Aorta (tissue), 5 donors: ENCODE measurements at regions of chr9 and their contacts with region 1.

Region 1: GRCh38 chr9:117644133-117644931 is 59.9 kb upstream of the TLR4 start:
- DNase-seq: peak; percentile 75 to 91
- ATAC-seq: peak; percentile 91
- H3K4me3 ChIP-seq: peak overlapping the region; percentile 26 to 37
- H3K27ac ChIP-seq: no peak overlapping the region
- H3K4me1 ChIP-seq: no peaks in the 10 kb centered on the region
- H3K27me3 ChIP-seq: no peaks in the 10 kb centered on the region

Region 2: GRCh38 chr9:117763314-117763713 is 119.0 kb after region 1 on chr9:
- intact Hi-C with region 1: no loop called
- DNase-seq: no peak
- ATAC-seq: no peak
- H3K4me3 ChIP-seq: no peak overlapping the region
- H3K27ac ChIP-seq: no peak overlapping the region
- H3K4me1 ChIP-seq: no peaks in the 10 kb centered on the region
- H3K27me3 ChIP-seq: no peaks in the 10 kb centered on the region

Region 3: GRCh38 chr9:117782931-117783788 is 138.8 kb after region 1 on chr9:
- intact Hi-C with region 1: loop called in 1 of 2 experiments (anchors 5 kb)
- DNase-seq: peak; percentile 84 to 85
- ATAC-seq: peak; percentile 88
- H3K4me3 ChIP-seq: peak overlapping the region; percentile 48 to 72
- H3K27ac ChIP-seq: no peak overlapping the region
- H3K4me1 ChIP-seq: peaks cover 0 to 4% of the 10 kb centered on the region in 2 donors
- H3K27me3 ChIP-seq: no peaks in the 10 kb centered on the region